Endothelial cell of umbilical vein (primary cell): ENCODE measurements at regions of chr12 and their contacts with region 1.

Region 1: DNA sequence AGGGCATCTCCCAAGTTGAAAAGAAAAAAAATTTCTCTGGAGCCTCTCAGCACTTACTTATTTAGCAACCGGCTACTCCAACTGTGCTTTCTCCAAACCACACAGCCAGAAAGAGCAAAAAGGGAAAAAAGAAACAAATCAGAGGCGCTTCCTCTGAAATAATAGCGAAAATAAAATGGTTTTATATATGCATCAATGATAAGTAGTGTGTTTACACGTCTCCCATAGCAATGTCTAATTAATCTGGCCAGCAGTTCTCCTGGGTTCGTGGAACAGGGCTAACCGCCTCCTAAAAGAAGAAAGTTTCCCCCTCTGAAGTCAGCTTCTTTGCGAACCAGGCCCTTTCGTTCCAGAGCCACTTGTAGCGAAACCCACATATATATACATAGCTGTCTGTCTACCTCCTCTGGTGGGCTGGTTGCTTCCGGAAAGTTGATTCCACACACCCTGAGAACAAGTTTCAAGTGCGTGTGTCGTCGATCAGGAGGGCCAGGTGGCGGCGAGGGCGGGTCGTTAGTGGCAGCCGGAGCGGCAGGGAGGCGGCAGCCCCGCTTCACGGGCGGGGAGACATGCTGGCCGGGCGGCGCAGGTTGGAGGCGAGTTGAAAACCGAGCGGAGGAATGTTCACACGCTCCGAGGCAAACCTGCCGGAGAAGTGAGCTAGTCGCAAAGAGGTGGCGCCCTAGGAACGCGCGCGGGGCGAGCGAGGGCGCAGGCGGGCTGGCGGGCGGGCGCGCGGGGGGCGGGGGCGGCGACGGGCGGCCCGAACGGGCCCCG is 2.7 kb downstream of the PTHLH start:
- DNase-seq: peak; percentile 66
- H3K4me3 ChIP-seq: peak overlapping the region; percentile 49 to 88 (median 70)
- H3K27ac ChIP-seq: peak overlapping the region; percentile 2
- H3K4me1 ChIP-seq: peaks cover 52% of the 10 kb centered on the region
- H3K27me3 ChIP-seq: no peaks in the 10 kb centered on the region
- CTCF ChIP-seq: peak in 1 of 2 donors; percentile 8
- POLR2A ChIP-seq: no peak

Region 2: DNA sequence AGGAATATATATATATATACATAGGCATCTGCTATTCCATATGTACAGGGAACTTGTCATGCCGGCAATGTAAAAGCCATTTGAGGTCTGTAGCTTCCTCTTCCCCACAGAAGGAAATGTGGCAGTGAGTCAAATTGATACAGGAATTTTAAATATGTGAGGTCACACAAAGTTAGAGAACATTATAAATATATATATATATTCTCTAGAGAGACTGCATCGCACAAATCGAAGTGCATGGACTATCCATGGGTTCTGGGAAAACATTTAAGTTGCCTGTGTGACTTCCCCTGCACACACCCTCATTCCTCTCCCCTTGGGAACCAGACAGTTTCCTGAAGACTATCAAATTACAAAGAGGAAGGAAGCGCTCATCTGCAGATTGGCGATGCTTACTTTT is 119.5 kb after region 1 on chr12:
- CTCF ChIA-PET with region 1: no interaction called
- POLR2A ChIA-PET with region 1: no interaction called
- dilution Hi-C with region 1: no loop called
- intact Hi-C with region 1: loop called (anchors 2 kb)
- DNase-seq: peak; percentile 37
- H3K4me3 ChIP-seq: no peak overlapping the region
- H3K27ac ChIP-seq: no peak overlapping the region
- H3K4me1 ChIP-seq: peaks cover 20% of the 10 kb centered on the region
- H3K27me3 ChIP-seq: no peaks in the 10 kb centered on the region
- CTCF ChIP-seq: no peak
- POLR2A ChIP-seq: no peak

Region 3: DNA sequence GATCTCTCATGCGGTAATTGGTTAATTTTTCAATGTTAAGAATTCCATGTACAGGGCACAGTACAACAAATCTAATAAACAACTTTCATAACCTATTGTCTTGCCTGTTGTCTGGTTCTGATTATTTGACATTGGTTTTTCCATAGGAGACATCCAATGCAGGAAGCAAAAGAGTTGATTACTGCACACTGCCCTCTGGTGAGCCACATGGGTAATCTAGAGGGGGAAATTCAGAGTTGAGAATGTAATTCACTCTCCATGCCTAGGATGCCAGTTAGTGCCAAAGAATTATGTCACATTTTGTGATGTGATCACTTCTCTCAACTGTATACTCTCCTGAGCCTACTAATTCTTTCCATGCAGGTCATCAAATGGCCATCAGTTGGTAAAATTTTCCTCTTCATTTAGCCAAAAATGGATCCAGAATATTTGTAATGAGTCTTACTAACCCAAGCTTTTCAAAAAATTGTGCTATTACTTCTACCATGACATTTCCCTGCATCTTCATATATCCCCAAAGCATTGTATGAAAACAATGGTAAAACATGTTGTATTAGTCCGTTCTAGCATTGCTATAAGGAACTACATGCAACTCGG is 202.7 kb after region 1 on chr12:
- CTCF ChIA-PET with region 1: interaction called, 20 read pairs
- POLR2A ChIA-PET with region 1: no interaction called
- dilution Hi-C with region 1: no loop called
- intact Hi-C with region 1: loop called (anchors 1 kb)
- DNase-seq: peak; percentile 73
- H3K4me3 ChIP-seq: no peak overlapping the region
- H3K27ac ChIP-seq: no peak overlapping the region
- H3K4me1 ChIP-seq: no peaks in the 10 kb centered on the region
- H3K27me3 ChIP-seq: no peaks in the 10 kb centered on the region
- CTCF ChIP-seq: peak; percentile 56 to 62
- POLR2A ChIP-seq: no peak

Region 4: GRCh38 chr12:28313631-28314030 is 343.8 kb after region 1 on chr12:
- CTCF ChIA-PET with region 1: no interaction called
- POLR2A ChIA-PET with region 1: no interaction called
- dilution Hi-C with region 1: no loop called
- intact Hi-C with region 1: loop called (anchors 5 kb)
- DNase-seq: peak; percentile 78
- H3K4me3 ChIP-seq: peak overlapping the region in 1 of 3 experiments; percentile 11
- H3K27ac ChIP-seq: peak overlapping the region; percentile 76
- H3K4me1 ChIP-seq: peaks cover 17% of the 10 kb centered on the region
- H3K27me3 ChIP-seq: no peaks in the 10 kb centered on the region
- CTCF ChIP-seq: no peak
- POLR2A ChIP-seq: no peak